PC-9 (cell line): ENCODE measurements at regions of chr1 and their contacts with region 1.

Region 1: DNA sequence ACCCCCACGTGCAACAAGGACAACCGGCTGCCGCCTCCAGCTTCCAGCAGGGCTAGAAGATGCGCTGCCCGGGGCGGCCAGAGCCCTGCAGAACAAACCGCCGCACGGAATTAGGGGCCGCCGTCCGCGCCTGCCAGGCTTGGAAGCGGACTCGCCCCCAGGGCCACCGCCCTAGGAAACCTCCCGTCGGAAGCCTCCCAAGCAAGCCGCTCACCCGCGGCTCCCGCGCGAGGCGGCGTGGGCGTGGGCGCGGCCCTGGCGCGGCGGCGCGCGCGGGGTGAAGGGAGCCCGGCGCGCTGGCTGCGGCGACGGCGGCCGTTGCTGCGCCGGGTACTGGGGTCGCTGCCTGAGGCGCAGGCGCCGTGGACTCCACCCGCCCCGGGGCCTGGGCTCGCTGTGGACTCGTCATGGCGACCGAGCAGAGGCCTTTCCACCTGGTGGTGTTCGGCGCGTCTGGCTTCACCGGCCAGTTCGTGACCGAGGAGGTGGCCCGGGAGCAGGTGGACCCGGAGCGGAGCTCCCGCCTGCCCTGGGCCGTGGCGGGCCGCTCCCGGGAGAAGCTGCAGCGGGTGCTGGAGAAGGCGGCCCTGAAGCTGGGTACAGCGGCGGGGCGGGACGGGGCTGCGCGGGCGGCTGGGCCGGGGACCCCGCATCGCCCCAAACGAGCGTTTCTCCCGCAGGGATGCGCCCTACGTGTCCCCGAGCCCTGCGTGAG is at the start of gene SCCPDH:
- DNase-seq: peak in 1 of 2 experiments; percentile 66
- H3K4me3 ChIP-seq: peak within 1 kb of the TSS; percentile 79
- H3K27ac ChIP-seq: no peak within 1 kb of the TSS
- H3K4me1 ChIP-seq: 0 out of 2 replicates have a peak, but pooled peaks cover 4% of the 10 kb centered on the region
- H3K27me3 ChIP-seq: no peaks in the 10 kb centered on the region
- CTCF ChIP-seq: no peak
- total RNA-seq, gene SCCPDH: 17.2 and 24.5 TPM in 2 replicates

Region 2: DNA sequence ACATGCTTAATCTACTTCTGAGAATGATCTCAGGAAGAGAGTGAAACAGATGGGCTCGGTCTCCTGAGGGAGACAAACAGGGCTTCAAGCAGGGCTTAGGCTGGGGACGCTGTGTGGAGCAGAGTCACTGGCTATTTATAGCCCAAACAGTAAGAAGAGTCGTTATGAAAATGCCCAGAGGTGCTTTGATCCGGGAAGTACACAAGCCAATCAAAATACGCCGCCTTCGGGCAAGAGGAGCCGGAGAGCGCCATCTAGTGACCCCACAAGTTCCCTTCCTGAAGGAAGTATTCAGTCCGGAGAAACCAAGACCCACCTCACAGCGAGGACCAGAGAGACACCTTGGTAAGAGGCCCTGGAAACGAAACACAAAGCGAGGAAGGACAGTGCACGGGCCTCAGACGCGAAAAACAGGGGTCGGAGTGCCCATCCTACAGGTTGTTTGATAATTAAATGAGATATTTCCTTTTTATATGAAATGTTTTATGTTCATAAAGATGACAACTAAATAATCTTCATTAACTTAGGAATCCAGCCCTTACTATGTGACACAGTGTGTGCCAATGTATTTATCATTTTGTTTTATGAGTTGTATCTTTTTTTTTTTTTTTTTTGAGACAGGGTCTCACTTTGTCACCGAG is 25.0 kb before region 1 on chr1:
- CTCF ChIA-PET with region 1: no interaction called
- POLR2A ChIA-PET with region 1: no interaction called
- intact Hi-C with region 1: loop called (anchors 2 kb)
- DNase-seq: peak; percentile 76 to 79
- H3K4me3 ChIP-seq: peak overlapping the region; percentile 20; the same call in 1 of the 2 replicates
- H3K27ac ChIP-seq: no peak overlapping the region
- H3K4me1 ChIP-seq: no peaks in the 10 kb centered on the region
- H3K27me3 ChIP-seq: no peaks in the 10 kb centered on the region
- CTCF ChIP-seq: peak; percentile 79

Region 3: DNA sequence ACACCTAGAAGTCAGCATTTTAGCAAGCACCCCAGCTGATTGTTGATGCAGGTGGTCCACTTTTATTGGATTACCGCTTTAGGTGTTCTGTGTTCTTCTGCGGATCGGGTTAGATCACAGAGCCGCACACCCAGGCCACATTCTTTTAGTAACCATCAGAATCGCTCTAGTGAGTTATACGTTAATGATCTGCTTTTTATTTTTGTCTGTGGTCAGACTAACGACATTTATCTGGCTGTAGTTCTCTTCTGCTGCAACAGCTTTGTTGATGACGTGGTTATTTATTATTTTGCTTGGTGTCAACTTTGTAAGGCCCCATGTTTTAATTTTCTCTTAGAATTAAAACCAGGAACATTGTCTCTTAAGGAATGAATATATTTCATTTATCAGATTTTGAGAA is 18.2 kb after region 1 on chr1:
- CTCF ChIA-PET with region 1: no interaction called
- POLR2A ChIA-PET with region 1: no interaction called
- intact Hi-C with region 1: no loop called
- DNase-seq: no peak
- H3K4me3 ChIP-seq: no peak overlapping the region
- H3K27ac ChIP-seq: no peak overlapping the region
- H3K4me1 ChIP-seq: no peaks in the 10 kb centered on the region
- H3K27me3 ChIP-seq: no peaks in the 10 kb centered on the region
- CTCF ChIP-seq: no peak

Region 4: DNA sequence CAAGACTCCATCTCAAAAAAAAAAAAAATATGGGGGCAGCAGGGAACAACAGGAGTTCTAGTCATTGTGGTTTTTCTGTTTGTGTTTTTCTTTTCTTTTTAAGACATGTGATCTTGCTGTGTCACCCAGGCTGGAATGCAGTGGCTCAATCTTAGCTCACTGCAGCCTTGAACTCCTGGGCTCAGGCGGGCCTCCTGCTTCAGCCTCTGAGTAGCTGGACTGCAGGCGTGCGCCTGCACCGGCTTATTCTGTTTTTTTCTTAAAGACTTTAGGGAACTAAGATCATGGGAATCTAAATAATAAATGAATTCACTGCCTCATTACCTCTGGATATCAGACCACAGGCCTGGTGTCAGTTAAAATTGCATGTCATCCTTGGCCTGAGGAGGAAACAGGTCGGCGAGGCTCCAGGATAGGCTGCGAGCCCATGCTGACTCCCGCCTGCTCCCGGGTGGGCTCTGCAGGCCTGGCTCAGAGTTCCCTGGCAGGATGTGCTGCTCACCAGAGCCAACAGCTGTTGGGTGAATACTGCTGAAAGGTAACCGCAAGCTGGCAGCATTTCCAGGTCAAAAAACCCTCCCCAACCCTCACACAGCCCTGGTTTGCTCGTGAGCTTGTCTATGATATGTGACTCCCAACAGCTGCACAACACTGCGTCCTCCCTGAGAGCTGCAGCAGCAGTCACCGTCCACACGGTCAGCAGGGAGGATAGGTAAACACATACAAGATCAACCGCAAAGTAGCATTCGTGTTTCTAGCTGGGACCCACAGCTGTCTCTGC is 58.1 kb after region 1 on chr1:
- CTCF ChIA-PET with region 1: no interaction called
- POLR2A ChIA-PET with region 1: no interaction called
- intact Hi-C with region 1: no loop called
- DNase-seq: no peak
- H3K4me3 ChIP-seq: no peak overlapping the region
- H3K27ac ChIP-seq: no peak overlapping the region
- H3K4me1 ChIP-seq: no peaks in the 10 kb centered on the region
- H3K27me3 ChIP-seq: no peaks in the 10 kb centered on the region
- CTCF ChIP-seq: no peak